Activated T-helper 2 cell treated with anti-CD3 and anti-CD28 coated beads, Interferon-gamma antibody, Interleukin-2, Interleukin-4, amounts not matched to agents 10 μg/mL and 5 μg/mL and 100 μg/mL, durations not matched to agents 14 hours and 24 hours and 36 hours (primary cell): ENCODE measurements at regions of chr11 and their contacts with region 1.

Region 1: GRCh38 chr11:72969894-72970335 is 155.7 kb downstream of the ATG16L2 start:
- DNase-seq: peak; percentile 13
- H3K4me3 Mint-ChIP-seq: peak overlapping the region; percentile 34
- H3K27ac Mint-ChIP-seq: peak overlapping the region; percentile 64
- H3K4me1 Mint-ChIP-seq: peaks cover 56% of the 10 kb centered on the region
- H3K27me3 Mint-ChIP-seq: no peaks in the 10 kb centered on the region

Region 2: GRCh38 chr11:72525466-72525865 is 444.4 kb before region 1 on chr11:
- intact Hi-C with region 1: loop called (anchors 10 kb)
- DNase-seq: no peak
- H3K4me3 Mint-ChIP-seq: no peak overlapping the region
- H3K27ac Mint-ChIP-seq: no peak overlapping the region
- H3K4me1 Mint-ChIP-seq: peaks cover 11% of the 10 kb centered on the region
- H3K27me3 Mint-ChIP-seq: peaks cover 24% of the 10 kb centered on the region

Region 3: GRCh38 chr11:73019449-73019848 is 49.5 kb after region 1 on chr11:
- intact Hi-C with region 1: no loop called
- DNase-seq: no peak
- H3K4me3 Mint-ChIP-seq: no peak overlapping the region
- H3K27ac Mint-ChIP-seq: no peak overlapping the region
- H3K4me1 Mint-ChIP-seq: no peaks in the 10 kb centered on the region
- H3K27me3 Mint-ChIP-seq: no peaks in the 10 kb centered on the region

Region 4: DNA sequence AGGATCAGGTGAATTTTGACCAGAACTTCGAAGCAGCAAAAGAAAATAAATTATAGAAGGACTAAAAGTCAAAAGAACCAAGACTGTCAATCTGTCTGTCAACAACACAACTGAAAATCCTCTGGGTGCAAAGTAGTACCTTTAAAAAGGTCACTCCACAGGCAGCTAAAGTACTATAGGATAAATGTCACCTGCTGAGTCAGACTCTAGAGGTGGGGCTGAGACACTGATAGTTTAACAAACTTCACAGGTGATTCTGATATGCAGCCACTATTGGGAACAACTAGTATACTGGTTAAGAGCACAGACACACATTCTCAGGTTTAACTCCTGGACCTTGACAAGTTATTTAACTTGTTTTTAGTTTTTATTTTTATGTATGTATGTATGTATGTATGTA is 64.9 kb after region 1 on chr11:
- intact Hi-C with region 1: loop called (anchors 2 kb)
- DNase-seq: no peak
- H3K4me3 Mint-ChIP-seq: no peak overlapping the region
- H3K27ac Mint-ChIP-seq: peak overlapping the region; percentile 65
- H3K4me1 Mint-ChIP-seq: peaks cover 17% of the 10 kb centered on the region
- H3K27me3 Mint-ChIP-seq: no peaks in the 10 kb centered on the region

Region 5: GRCh38 chr11:73141848-73142286 is 172.0 kb after region 1 on chr11:
- intact Hi-C with region 1: loop called (anchors 2 kb)
- DNase-seq: no peak
- H3K4me3 Mint-ChIP-seq: peak overlapping the region; percentile 99
- H3K27ac Mint-ChIP-seq: peak overlapping the region; percentile 96
- H3K4me1 Mint-ChIP-seq: peaks cover 33% of the 10 kb centered on the region
- H3K27me3 Mint-ChIP-seq: no peaks in the 10 kb centered on the region